ENCODE measurements at regions of chr6 and their contacts with region 1.

Region 1: GRCh38 chr6:160733050-160733646 is 31.1 kb downstream of the PLG start:
- DNase-seq: no peak
- H3K4me3 ChIP-seq: no peak overlapping the region
- H3K27ac ChIP-seq: no peak overlapping the region
- H3K4me1 ChIP-seq: no peaks in the 10 kb centered on the region
- H3K27me3 ChIP-seq: peaks cover 0 to 6% (median 0%) of the 10 kb centered on the region in 4 donors
- CTCF ChIP-seq: peak; percentile 43 to 60 (median 45)
- EP300 ChIP-seq: no peak
- POLR2A ChIP-seq: no peak

Region 2: GRCh38 chr6:160261991-160262680 is 471.0 kb before region 1 on chr6:
- intact Hi-C with region 1: no loop called
- DNase-seq: peak; percentile 68
- H3K4me3 ChIP-seq: no peak overlapping the region
- H3K27ac ChIP-seq: no peak overlapping the region
- H3K4me1 ChIP-seq: peaks cover 0 to 11% (median 3%) of the 10 kb centered on the region in 4 donors
- H3K27me3 ChIP-seq: no peaks in the 10 kb centered on the region
- CTCF ChIP-seq: no peak
- EP300 ChIP-seq: no peak
- POLR2A ChIP-seq: no peak

Region 3: DNA sequence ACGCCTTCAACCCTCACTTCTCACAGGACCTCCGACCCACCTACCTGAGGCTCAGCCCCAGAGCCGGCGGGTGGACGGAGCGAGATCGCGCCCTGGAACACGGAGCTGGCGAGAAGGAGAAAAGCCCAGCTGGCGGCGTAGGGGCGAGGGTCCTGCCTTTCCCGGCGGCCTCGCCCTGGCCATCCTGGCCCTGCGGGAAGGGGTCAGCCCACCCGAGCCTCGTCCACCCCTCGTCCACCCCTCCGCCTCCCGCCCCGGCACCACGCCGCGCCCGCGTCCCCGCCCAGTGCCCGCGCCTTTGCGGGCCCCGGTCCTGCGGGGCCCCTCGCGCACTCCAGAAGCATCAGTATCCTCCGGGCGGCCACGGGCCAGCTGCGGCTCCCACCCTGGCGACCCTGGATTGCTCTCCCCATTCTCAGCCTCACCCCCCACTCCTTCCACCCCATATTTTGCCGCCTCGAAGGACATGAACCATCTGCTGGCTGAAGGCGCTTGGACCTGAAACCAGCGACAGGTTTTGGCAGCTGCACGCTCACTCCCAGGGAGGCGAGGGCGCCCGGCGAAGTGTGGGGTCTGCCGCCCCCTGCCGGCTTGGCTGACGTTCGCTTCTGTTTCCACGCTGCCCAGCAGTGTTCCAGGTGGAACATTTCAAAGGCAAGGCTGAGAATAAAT is 34.0 kb after region 1 on chr6:
- intact Hi-C with region 1: loop called (anchors 5 kb)
- DNase-seq: peak; percentile 92
- H3K4me3 ChIP-seq: peak overlapping the region; percentile 53 to 59 (median 54)
- H3K27ac ChIP-seq: no peak overlapping the region
- H3K4me1 ChIP-seq: peaks cover 7 to 17% (median 12%) of the 10 kb centered on the region in 4 donors
- H3K27me3 ChIP-seq: peaks cover 0 to 9% (median 0%) of the 10 kb centered on the region in 4 donors
- CTCF ChIP-seq: peak; percentile 52 to 74 (median 69)
- EP300 ChIP-seq: no peak
- POLR2A ChIP-seq: no peak

Region 4: GRCh38 chr6:161761966-161762365 is 1028.8 kb after region 1 on chr6:
- intact Hi-C with region 1: no loop called
- DNase-seq: no peak
- H3K4me3 ChIP-seq: no peak overlapping the region
- H3K27ac ChIP-seq: no peak overlapping the region
- H3K4me1 ChIP-seq: no peaks in the 10 kb centered on the region
- H3K27me3 ChIP-seq: no peaks in the 10 kb centered on the region
- CTCF ChIP-seq: no peak
- EP300 ChIP-seq: no peak
- POLR2A ChIP-seq: no peak

Measured in esophagus muscularis mucosa (tissue), 4 donors.